Caco-2 (cell line): ENCODE measurements at regions of chr5 and their contacts with region 1.

Region 1: DNA sequence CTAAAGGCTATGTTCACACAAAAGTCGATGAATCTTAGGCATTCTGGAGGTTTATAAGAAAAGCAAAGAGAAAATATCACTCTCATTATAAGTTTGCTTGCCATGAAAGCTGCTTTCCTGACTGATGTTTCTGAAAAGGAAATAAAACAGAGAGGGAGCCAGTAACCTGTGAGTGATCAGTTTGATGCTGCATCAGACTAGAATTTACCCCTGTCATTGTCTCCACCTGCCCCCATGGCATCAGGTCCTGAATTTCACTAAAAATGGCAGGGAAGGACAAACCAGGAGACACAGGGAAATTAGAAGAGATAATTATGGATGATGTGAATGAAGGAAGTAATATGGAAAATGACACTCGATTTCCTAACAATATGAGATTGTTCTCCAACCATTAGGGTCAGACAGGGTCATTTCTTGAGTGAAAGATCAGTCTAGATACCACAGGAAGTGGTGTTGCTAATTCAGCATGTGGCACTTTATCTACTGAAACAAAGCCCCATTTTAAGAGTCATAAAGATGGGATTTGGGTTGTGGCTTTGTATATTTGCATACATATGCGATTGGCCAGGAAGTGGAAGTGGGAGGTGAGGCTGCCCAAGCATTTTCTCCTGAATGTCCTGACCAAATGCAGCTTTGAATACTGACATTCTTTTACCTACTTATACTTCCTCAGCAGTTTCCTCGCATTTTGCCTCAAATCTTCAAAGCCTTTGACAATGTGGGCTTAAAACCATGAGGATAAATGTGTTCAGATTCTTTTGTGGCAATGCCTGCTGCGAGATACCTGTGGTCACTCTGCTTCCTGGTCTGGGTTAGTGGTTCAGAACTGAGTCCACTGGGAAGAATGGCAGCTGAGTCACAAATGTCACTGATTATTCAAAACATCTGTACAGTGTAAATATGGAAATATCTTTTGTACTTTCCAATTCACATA is 29.7 kb downstream of the MEGF10 start:
- DNase-seq: no peak
- H3K4me3 ChIP-seq: no peak overlapping the region
- H3K4me3 Mint-ChIP-seq: no peak overlapping the region
- H3K27ac Mint-ChIP-seq: no peak overlapping the region
- H3K4me1 ChIP-seq: no peaks in the 10 kb centered on the region
- H3K4me1 Mint-ChIP-seq: no peaks in the 10 kb centered on the region
- H3K27me3 ChIP-seq: no peaks in the 10 kb centered on the region
- H3K27me3 Mint-ChIP-seq: peaks cover 10% of the 10 kb centered on the region
- CTCF ChIP-seq: no peak

Region 2: GRCh38 chr5:127280491-127281220 is 39.6 kb before region 1 on chr5:
- CTCF ChIA-PET with region 1: no interaction called
- POLR2A ChIA-PET with region 1: no interaction called
- intact Hi-C with region 1: loop called (anchors 5 kb)
- DNase-seq: peak in 1 of 2 experiments; percentile 35
- H3K4me3 ChIP-seq: no peak overlapping the region
- H3K4me3 Mint-ChIP-seq: no peak overlapping the region
- H3K27ac Mint-ChIP-seq: no peak overlapping the region
- H3K4me1 ChIP-seq: no peaks in the 10 kb centered on the region
- H3K4me1 Mint-ChIP-seq: no peaks in the 10 kb centered on the region
- H3K27me3 ChIP-seq: no peaks in the 10 kb centered on the region
- H3K27me3 Mint-ChIP-seq: no peaks in the 10 kb centered on the region
- CTCF ChIP-seq: peak in 1 of 2 experiments; percentile 54